Tibial artery (tissue), 4 donors: ENCODE measurements at regions of chr4 and their contacts with region 1.

Region 1: DNA sequence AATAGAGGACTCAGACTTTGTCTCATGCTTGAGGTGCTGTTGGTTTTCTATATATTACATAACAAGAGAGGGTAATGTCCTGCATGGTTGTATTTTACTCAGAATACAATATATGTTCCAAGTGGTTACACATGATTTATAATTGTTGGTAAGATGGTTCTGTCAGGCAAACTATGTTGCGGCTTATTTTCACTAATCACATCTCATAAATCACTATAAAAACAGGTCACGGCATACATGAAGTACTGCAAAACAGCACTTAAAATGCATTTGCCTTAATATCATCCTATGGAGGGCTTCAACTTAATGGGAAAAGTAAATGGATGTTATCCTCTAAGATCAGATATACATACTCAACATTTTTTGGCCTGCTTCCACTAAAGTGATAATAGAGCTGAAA is 246.0 kb upstream of the ARSJ start:
- DNase-seq: no peak
- H3K4me3 ChIP-seq: no peak overlapping the region
- H3K27ac ChIP-seq: no peak overlapping the region
- H3K4me1 ChIP-seq: no peaks in the 10 kb centered on the region
- H3K27me3 ChIP-seq: no peaks in the 10 kb centered on the region
- CTCF ChIP-seq: no peak

Region 2: DNA sequence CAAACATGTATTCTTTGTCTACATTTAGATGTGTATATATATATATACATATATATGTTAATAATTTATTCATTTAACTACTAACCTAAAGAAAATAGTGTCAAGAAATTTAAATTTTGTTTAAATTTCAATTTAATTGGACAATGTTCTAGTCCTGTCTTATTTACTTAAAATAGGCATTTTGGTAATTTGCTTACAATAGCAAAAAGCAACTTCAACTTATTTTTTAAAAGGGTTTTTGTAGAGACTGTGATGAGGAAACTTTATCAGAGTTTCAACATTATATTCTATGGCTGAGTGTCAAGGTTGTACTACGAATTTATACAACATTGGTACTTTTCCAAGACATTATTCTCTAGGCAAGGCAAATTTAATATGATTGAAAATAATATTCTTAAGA is 33.9 kb before region 1 on chr4:
- intact Hi-C with region 1: loop called (anchors 2 kb)
- DNase-seq: no peak
- H3K4me3 ChIP-seq: no peak overlapping the region
- H3K27ac ChIP-seq: no peak overlapping the region
- H3K4me1 ChIP-seq: no peaks in the 10 kb centered on the region
- H3K27me3 ChIP-seq: no peaks in the 10 kb centered on the region
- CTCF ChIP-seq: no peak

Region 3: GRCh38 chr4:114547340-114548134 is 322.1 kb after region 1 on chr4:
- intact Hi-C with region 1: no loop called
- DNase-seq: no peak
- H3K4me3 ChIP-seq: no peak overlapping the region
- H3K27ac ChIP-seq: no peak overlapping the region
- H3K4me1 ChIP-seq: no peaks in the 10 kb centered on the region
- H3K27me3 ChIP-seq: no peaks in the 10 kb centered on the region
- CTCF ChIP-seq: no peak